ENCODE measurements at regions of chr1 and their contacts with region 1.

Region 1: GRCh38 chr1:72111662-72112061 is 170.7 kb downstream of the NEGR1 start:
- DNase-seq: no peak
- H3K4me3 ChIP-seq: no peak overlapping the region
- H3K27ac ChIP-seq: no peak overlapping the region
- H3K4me1 ChIP-seq: no peaks in the 10 kb centered on the region
- CTCF ChIP-seq: no peak

Region 2: GRCh38 chr1:72122099-72122880 is 10.6 kb after region 1 on chr1:
- CTCF ChIA-PET with region 1: no interaction called
- POLR2A ChIA-PET with region 1: interaction called, 3 read pairs
- intact Hi-C with region 1: loop called (anchors 1 kb)
- DNase-seq: no peak
- H3K4me3 ChIP-seq: no peak overlapping the region
- H3K27ac ChIP-seq: no peak overlapping the region
- H3K4me1 ChIP-seq: no peaks in the 10 kb centered on the region
- CTCF ChIP-seq: no peak

Measured in OCI-LY7 (cell line).